GM10248 (cell line): ENCODE measurements at regions of chr7 and their contacts with region 1.

Region 1: DNA sequence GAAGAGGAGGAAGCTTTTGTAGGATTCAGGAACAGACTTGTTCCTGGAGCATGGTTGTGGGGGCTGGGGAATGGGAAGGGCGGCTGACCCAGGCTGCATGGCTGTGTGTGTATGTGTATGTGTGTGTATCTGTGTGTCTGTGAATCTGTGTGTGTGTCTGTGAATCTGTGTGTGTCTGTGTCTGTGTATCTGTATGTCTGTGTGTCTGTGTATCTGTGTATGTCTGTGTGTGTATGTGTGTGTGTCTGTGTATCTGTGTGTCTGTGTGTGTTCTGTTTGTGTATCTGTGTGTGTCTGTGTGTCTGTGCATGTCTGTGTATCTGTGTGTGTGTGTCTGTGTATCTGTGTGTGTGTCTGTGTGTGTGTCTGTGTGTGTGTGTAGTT is 6.6 kb upstream of the STX1A start:
- DNase-seq: no peak
- CTCF ChIP-seq: no peak

Region 2: DNA sequence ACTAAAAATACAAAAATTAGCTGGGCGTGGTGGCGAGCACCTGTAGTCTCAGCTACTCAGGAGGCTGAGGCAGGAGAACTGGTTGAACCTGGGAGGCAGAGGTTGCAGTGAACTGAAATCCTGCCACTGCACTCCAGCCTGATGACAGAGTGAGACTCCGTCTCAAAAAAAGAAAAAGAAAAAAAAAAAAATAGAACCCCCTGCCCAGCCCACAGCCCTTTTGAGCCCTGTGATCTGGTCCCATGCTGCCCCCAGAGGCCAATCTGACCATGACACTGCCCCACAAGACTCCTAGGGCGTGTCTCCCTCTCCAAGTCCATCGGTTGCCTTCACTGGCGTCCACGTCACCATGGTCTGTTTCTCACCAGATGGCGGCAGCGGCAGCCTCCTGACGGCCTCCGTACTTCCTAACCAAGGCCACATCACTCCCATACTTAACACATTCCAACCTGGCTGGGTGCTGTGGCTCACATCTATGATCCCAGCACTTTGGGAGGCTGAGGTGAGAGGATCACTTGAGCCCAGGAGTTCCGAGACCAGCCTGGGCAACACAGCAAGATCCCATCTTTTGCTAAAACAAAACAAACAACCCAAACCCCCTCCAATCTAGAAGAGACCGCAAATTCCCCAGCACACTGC is 24.6 kb before region 1 on chr7:
- CTCF ChIA-PET with region 1: interaction called, 15 read pairs
- POLR2A ChIA-PET with region 1: no interaction called
- DNase-seq: peak; percentile 63
- CTCF ChIP-seq: peak; percentile 48

Region 3: GRCh38 chr7:73738612-73739374 is 12.7 kb after region 1 on chr7 and contains the start of gene ABHD11:
- CTCF ChIA-PET with region 1: interaction called, 40 read pairs
- POLR2A ChIA-PET with region 1: interaction called, 5 read pairs
- DNase-seq: peak; percentile 100
- CTCF ChIP-seq: no peak

Region 4: DNA sequence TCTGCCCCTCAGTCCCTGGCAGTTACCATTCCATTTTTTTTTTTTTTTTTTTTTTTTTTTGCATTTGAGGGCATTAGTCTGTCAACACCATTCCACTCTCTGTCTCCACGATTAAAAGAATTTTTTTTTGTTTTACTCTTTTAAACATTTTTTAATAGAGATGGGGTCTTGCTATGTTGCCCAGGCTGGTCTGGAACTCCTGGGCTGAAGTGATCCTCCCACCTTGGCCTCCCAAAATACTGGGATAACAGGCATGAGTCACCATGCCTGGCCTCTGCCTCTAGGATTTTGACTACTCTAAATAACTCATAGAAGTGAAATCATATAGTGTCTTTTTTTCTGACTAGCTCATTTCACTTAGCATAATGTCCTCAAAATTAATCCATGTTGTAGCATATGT is 60.5 kb after region 1 on chr7:
- CTCF ChIA-PET with region 1: no interaction called
- POLR2A ChIA-PET with region 1: no interaction called
- DNase-seq: no peak
- CTCF ChIP-seq: no peak